GM12878 (cell line): ENCODE measurements at regions of chr9 and their contacts with region 1.

Region 1: GRCh38 chr9:36728651-36729520 is 156.2 kb downstream of the MELK start:
- DNase-seq: peak; percentile 13
- ATAC-seq: peak; percentile 86
- H3K4me3 ChIP-seq: no peak overlapping the region
- H3K27ac ChIP-seq: no peak overlapping the region
- H3K4me1 ChIP-seq: peaks cover 6% of the 10 kb centered on the region
- H3K27me3 ChIP-seq: no peaks in the 10 kb centered on the region
- CTCF ChIP-seq: peak; percentile 85 to 95 (median 94); a peak in 5 of 6 replicates
- EP300 ChIP-seq: no peak
- POLR2A ChIP-seq: no peak
- RAD21 ChIP-seq: peak; percentile 92

Region 2: DNA sequence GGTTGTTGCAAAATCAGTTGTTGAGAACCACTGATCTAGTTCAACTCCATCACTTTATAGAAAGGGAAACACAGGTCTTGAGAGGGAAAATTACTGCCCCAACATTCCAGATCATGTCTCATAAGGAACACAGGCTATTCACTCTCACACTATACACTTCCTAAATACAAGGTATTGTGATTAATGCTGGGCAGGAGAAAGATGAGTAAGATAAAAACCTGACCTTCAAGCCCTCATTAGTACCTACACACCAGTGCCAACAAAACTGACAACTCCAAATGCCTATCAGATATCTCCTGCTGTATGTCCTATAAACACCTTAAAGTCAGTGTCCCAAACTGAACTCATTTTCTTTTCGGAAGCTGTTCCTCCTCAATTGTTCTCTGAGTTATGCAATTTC is 478.8 kb before region 1 on chr9:
- CTCF ChIA-PET with region 1: interaction called, 4 read pairs
- POLR2A ChIA-PET with region 1: no interaction called
- RAD21 ChIA-PET with region 1: interaction called, 3 read pairs
- SMC1A ChIA-PET with region 1: no interaction called
- in situ Hi-C with region 1: no loop called
- intact Hi-C with region 1: loop called (anchors 5 kb)
- DNase-seq: no peak
- ATAC-seq: peak; percentile 56
- H3K4me3 ChIP-seq: no peak overlapping the region
- H3K27ac ChIP-seq: no peak overlapping the region
- H3K4me1 ChIP-seq: peaks cover 22% of the 10 kb centered on the region
- H3K27me3 ChIP-seq: no peaks in the 10 kb centered on the region
- CTCF ChIP-seq: no peak
- EP300 ChIP-seq: no peak
- POLR2A ChIP-seq: no peak
- RAD21 ChIP-seq: no peak

Region 3: DNA sequence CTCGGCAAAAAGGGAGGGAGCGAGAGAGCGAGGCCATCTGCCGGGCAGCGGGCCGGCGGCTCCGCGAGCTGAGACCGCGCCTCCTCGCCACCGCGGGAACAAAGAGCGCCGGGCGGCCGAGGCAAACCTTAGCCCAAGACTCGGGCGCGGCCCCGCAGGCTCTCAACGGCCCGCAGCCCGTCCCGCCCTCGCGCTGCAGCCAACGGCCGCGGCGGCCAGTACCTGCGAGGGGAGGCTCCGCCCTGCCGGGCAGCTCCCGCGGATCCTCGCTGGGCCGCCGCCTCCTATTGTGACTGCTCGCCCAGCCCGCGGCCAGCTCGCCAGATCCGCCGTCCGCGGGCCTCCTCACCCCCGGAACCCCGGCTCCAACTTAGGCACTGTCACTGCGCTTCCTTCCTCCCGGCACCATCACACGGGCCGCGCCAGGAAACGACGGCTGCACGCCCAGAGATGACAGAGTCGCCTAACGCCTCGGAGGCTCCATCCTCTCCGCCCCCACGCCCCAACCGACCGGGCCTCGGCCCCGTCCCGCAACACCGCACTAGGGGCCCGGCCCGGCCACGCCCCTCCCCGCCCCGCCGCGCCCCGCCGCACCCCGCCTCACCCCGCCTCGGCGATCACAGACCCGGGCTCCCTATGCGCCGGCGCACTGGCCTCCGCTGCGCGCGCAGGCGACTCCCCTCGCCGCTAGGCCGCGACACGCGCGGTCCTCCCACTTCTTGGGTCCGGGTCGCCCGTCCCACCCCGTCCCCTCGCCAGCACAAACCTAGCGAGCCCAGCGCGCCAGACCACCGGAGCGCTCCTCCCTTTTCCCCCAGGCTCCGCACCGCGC is 328.3 kb before region 1 on chr9:
- CTCF ChIA-PET with region 1: interaction called, 55 read pairs
- POLR2A ChIA-PET with region 1: no interaction called
- RAD21 ChIA-PET with region 1: interaction called, 4 read pairs
- SMC1A ChIA-PET with region 1: interaction called, 37 read pairs
- in situ Hi-C with region 1: loop called (anchors 25 kb)
- intact Hi-C with region 1: no loop called
- DNase-seq: peak; percentile 42
- ATAC-seq: peak; percentile 90
- H3K4me3 ChIP-seq: peak overlapping the region; percentile 76
- H3K27ac ChIP-seq: peak overlapping the region; percentile 89
- H3K4me1 ChIP-seq: peaks cover 13% of the 10 kb centered on the region
- H3K27me3 ChIP-seq: no peaks in the 10 kb centered on the region
- CTCF ChIP-seq: 0 out of 6 replicates have a peak, but pooled peaks of 1 of the 3 experiments have one; percentile 3
- EP300 ChIP-seq: no peak; a peak in 1 of 4 replicates
- POLR2A ChIP-seq: peak; percentile 88
- RAD21 ChIP-seq: no peak

Region 4: GRCh38 chr9:36632892-36633291 is 96.0 kb before region 1 on chr9:
- CTCF ChIA-PET with region 1: interaction called, 63 read pairs
- POLR2A ChIA-PET with region 1: no interaction called
- RAD21 ChIA-PET with region 1: interaction called, 18 read pairs
- SMC1A ChIA-PET with region 1: interaction called, 26 read pairs
- in situ Hi-C with region 1: loop called (anchors 5 kb)
- intact Hi-C with region 1: loop called (anchors 1 kb)
- DNase-seq: no peak
- ATAC-seq: peak; percentile 63
- H3K4me3 ChIP-seq: no peak overlapping the region
- H3K27ac ChIP-seq: no peak overlapping the region
- H3K4me1 ChIP-seq: no peaks in the 10 kb centered on the region
- H3K27me3 ChIP-seq: no peaks in the 10 kb centered on the region
- CTCF ChIP-seq: peak; percentile 46 to 56 (median 52); a peak in 5 of 6 replicates
- EP300 ChIP-seq: no peak
- POLR2A ChIP-seq: no peak
- RAD21 ChIP-seq: peak; percentile 57

Region 5: DNA sequence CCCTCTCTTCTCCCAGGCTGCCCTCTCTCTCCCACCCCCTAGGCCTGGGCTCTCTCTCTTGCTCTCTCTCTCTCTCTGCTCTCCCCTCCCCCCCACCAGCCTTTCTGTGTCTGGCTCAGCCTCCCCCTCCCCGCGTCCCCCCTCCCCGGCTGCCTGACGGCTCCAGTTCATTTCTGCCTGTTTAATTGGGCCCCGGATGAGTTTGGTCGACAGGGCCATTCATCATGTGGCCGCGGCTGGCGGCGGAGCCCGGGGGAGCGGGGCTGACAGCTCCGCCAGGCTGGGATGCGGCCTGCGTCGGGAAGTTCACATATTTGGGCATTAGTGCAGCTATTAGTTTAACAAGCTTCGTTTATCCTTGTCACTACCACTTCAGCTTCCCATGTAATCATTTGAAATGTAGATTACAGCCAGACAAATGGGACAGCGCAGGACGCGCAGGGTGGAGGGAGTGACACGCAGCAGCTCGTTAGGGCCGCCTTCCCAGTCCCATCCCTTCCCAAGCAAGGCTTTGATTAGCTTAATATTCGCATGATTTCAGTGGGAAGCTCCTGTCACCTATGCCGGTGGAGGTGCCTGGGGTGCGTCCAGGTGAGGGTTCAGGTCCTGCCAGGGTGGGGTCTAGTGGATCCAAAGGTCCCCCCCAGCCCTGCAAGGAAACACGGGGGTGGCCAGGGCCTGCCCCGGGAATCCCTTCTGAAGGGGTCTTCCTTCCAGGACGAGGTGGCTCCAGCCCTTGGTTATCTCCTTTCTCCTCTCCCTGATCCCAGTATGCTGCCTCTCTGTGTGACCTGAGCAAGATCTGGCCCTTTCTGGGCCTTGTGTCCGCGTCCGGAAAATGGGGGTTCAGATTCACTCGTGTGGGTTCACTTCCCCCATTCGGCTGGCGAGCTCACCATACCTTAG is 90.3 kb after region 1 on chr9:
- CTCF ChIA-PET with region 1: no interaction called
- POLR2A ChIA-PET with region 1: no interaction called
- RAD21 ChIA-PET with region 1: no interaction called
- SMC1A ChIA-PET with region 1: no interaction called
- in situ Hi-C with region 1: no loop called
- intact Hi-C with region 1: no loop called
- DNase-seq: no peak
- ATAC-seq: no peak
- H3K4me3 ChIP-seq: no peak overlapping the region
- H3K27ac ChIP-seq: no peak overlapping the region
- H3K4me1 ChIP-seq: no peaks in the 10 kb centered on the region
- H3K27me3 ChIP-seq: peaks cover 3 to 4% of the 10 kb centered on the region in 2 experiments; a peak in 3 of 4 replicates
- CTCF ChIP-seq: no peak
- EP300 ChIP-seq: no peak
- POLR2A ChIP-seq: no peak
- RAD21 ChIP-seq: no peak